ENCODE measurements at regions of chr11 and their contacts with region 1.

Region 1: DNA sequence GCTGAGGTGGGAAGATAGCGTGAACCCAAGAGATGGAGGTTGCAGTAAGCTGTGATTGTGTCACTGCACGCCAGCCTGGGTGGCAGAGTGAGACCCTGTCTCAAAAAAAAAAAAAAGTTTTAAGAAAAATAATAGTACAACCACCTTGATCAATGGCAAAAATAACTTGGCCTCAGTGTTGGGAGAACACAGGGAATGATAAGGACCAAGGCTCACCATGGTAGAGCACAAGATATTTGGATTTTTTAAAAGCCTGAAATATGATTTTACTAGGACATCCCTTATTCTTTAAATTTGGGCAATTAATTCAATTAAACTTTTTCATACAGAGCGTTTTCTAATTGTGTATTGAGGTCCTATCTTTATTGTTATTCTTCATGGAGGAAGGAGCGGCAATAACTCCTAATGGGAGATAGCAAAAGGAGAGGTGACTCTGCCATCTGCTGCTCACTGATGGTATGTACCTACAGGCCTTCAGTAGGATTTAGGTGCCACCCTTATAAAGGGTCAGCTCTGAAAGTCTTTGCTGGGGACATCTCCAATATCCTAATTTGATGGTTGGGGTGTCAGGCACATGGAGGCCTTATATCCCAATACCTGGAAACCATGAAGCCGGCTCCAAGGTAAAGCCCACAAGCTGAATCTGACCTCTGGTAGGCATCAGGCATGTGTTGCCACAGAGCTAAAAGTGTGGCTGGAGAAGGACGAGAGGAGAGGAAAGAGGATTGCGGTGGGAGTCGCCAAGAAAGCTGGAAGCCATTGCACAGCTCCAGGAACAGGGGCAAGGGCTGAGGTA is 21.9 kb upstream of the POLD3 start:
- DNase-seq: no peak
- H3K4me3 ChIP-seq: no peak overlapping the region
- H3K27me3 ChIP-seq: peaks cover 9% of the 10 kb centered on the region
- CTCF ChIP-seq: peak; percentile 66

Region 2: GRCh38 chr11:74581954-74582547 is 11.6 kb after region 1 on chr11:
- CTCF ChIA-PET with region 1: interaction called, 12 read pairs
- POLR2A ChIA-PET with region 1: no interaction called
- DNase-seq: no peak
- H3K4me3 ChIP-seq: no peak overlapping the region
- H3K27me3 ChIP-seq: peaks cover 3% of the 10 kb centered on the region
- CTCF ChIP-seq: no peak

Measured in BJ (cell line).